Heart left ventricle (tissue), 16 donors: ENCODE measurements at regions of chr9 and their contacts with region 1.

Region 1: GRCh38 chr9:137295238-137295811 is 6.7 kb downstream of the NRARP start:
- DNase-seq: peak in 3 of 5 donors; percentile 28 to 78 (median 47)
- ATAC-seq: peak in 2 of 4 donors; percentile 49 to 51
- H3K4me3 ChIP-seq: peak overlapping the region in 11 of 12 donors; percentile 17 to 70 (median 52)
- H3K27ac ChIP-seq: peak overlapping the region in 10 of 12 donors; percentile 49 to 98 (median 89)
- H3K4me1 ChIP-seq: peaks cover 0 to 61% (median 27%) of the 10 kb centered on the region in 12 donors
- H3K27me3 ChIP-seq: peaks cover 0 to 63% (median 20%) of the 10 kb centered on the region in 9 donors
- CTCF ChIP-seq: peak in 11 of 12 donors; percentile 20 to 92 (median 62)
- POLR2A ChIP-seq: no peak

Region 2: DNA sequence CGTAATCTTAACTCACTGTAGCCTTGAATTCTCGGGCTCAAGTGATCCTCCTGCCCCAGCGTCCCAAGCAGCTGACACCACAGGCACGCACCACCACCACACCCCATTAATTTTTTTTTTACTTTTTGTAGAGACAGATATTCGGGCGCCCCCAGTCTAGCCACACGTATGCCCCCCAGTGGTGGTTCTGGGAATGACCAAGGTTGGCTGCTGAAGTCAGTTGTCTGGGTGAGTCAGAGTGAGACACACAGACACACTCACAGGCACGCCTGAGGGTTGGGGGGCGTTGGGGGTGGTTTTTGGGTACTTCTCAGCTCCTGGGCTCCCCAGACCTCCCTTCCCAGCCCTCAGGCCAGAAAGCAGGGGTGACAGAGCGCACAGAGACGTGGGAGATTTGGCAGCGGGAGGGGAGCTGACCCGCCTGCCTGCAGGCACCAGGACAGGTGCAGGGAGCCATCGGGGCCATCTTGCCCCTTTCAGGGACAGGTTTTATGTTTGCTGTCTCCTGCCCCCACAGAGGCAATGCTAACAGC is 150.0 kb after region 1 on chr9:
- intact Hi-C with region 1: loop called in 1 of 10 experiments (anchors 2 kb)
- DNase-seq: peak; percentile 69 to 81 (median 74)
- ATAC-seq: peak; percentile 30 to 70 (median 68)
- H3K4me3 ChIP-seq: no peak overlapping the region
- H3K27ac ChIP-seq: no peak overlapping the region
- H3K4me1 ChIP-seq: peaks cover 0 to 19% (median 4%) of the 10 kb centered on the region in 12 donors
- H3K27me3 ChIP-seq: peaks cover 0 to 31% (median 5%) of the 10 kb centered on the region in 9 donors
- CTCF ChIP-seq: peak; percentile 67 to 88 (median 79)
- POLR2A ChIP-seq: no peak

Region 3: GRCh38 chr9:137521405-137521985 is 226.2 kb after region 1 on chr9:
- intact Hi-C with region 1: loop called in 4 of 10 experiments (anchors 5 to 10 kb)
- DNase-seq: no peak
- ATAC-seq: no peak
- H3K4me3 ChIP-seq: no peak overlapping the region
- H3K27ac ChIP-seq: no peak overlapping the region
- H3K4me1 ChIP-seq: no peaks in the 10 kb centered on the region
- H3K27me3 ChIP-seq: no peaks in the 10 kb centered on the region
- CTCF ChIP-seq: no peak
- POLR2A ChIP-seq: no peak